Activated B cell treated with CpG ODN at 0.5 μM for 24 hours (primary cell): ENCODE measurements at regions of chr2 and their contacts with region 1.

Region 1: DNA sequence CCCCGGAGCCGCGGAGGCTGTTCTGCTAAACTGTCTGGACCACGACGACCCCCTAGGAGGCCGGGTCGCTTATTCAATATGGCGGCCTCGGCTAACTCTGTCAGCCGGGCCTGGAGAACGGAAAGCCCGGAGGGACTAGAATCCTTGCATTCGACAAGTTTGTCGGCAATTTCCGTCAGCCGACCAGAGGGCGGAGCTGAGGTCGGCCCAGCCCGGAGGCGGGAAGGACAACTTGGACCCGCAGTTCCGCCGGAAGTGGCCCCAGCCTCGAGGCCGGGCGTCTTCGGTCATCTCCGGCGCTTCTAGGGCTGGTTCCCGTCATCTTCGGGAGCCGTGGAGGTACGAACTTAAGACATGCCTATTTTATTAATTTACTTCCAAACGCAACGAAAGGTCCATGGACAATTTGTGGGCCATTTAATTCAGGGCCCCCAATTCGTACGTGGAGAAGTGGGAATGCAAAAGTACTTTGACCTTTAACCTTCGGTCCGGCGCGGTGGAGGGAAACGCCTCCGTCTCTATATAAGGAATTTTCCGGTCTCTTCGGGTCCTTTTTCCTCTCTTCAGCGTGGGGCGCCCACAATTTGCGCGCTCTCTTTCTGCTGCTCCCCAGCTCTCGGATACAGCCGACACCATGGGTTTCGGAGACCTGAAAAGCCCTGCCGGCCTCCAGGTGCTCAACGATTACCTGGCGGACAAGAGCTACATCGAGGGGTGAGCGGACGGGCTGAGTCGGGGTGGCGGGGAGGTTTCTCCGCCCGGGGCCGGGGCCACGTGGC is at the starts of genes EEF1B2 and NDUFS1:
- DNase-seq: peak; percentile 90
- ATAC-seq: peak; percentile 88
- H3K4me3 Mint-ChIP-seq: peak within 1 kb of the TSS; percentile 99
- H3K27ac Mint-ChIP-seq: peak within 1 kb of the TSS; percentile 97
- H3K4me1 Mint-ChIP-seq: peaks cover 56% of the 10 kb centered on the region
- H3K27me3 Mint-ChIP-seq: no peaks in the 10 kb centered on the region
- CTCF ChIP-seq: no peak
- total RNA-seq, gene EEF1B2: 1,278 and 1,486 TPM in 2 replicates
- total RNA-seq, gene NDUFS1: 47.3 and 50.1 TPM in 2 replicates

Region 2: GRCh38 chr2:205947621-205948495 is 211.7 kb before region 1 on chr2:
- CTCF ChIA-PET with region 1: no interaction called
- POLR2A ChIA-PET with region 1: no interaction called
- intact Hi-C with region 1: no loop called
- DNase-seq: peak; percentile 28
- ATAC-seq: peak; percentile 64
- H3K4me3 Mint-ChIP-seq: no peak overlapping the region
- H3K27ac Mint-ChIP-seq: no peak overlapping the region
- H3K4me1 Mint-ChIP-seq: peaks cover 2% of the 10 kb centered on the region
- H3K27me3 Mint-ChIP-seq: peaks cover 19% of the 10 kb centered on the region
- CTCF ChIP-seq: peak; percentile 89

Region 3: GRCh38 chr2:206085742-206086445 is 73.6 kb before region 1 on chr2 and contains the start of gene INO80D:
- CTCF ChIA-PET with region 1: interaction called, 3 read pairs
- POLR2A ChIA-PET with region 1: interaction called, 25 read pairs
- intact Hi-C with region 1: loop called (anchors 1 kb)
- DNase-seq: peak; percentile 76
- ATAC-seq: peak; percentile 89
- H3K4me3 Mint-ChIP-seq: peak within 1 kb of the TSS; percentile 99
- H3K27ac Mint-ChIP-seq: peak within 1 kb of the TSS; percentile 100
- H3K4me1 Mint-ChIP-seq: peaks cover 42% of the 10 kb centered on the region
- H3K27me3 Mint-ChIP-seq: no peaks in the 10 kb centered on the region
- CTCF ChIP-seq: no peak
- total RNA-seq, gene INO80D: 52.1 and 53.1 TPM in 2 replicates

Region 4: DNA sequence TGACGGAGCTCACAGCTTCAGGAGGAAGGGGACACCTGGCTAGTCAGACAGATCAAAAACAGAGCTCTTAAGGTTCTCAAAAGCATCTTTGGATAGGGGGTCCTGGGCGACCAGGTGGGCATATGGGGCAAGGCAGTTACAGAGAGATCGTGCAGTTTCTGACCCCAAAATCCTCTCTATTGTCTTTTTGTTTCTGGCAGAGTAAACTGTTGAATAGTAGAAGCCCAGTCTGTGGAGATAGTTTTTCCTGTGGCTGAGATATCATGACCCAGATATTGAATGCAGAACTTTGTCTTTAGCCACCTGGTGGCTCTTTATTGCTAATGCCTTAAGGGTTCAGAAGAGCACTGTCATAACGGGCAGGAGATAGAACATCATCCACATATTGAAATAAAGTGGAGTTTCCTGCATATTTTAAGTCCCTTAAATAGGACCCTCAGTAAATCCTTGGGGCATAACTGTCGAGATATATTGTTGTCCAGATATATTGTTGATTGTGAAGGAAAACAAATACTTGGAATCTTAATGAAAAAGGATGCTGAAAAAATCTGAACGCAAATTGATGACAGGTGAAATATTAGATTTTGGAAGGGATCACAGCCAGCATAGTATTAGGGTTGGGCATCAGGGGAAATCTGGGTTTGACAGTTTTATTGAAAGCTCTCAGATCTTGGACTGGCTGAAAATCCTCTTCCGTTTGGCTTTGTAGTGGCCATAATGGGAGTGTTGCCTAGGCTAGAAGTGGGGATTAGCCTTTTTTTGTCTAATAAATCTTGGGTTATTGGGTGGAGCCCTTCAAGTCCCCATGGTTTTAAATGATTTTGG is 100.9 kb after region 1 on chr2:
- CTCF ChIA-PET with region 1: interaction called, 7 read pairs
- POLR2A ChIA-PET with region 1: no interaction called
- intact Hi-C with region 1: loop called (anchors 1 kb)
- DNase-seq: no peak
- ATAC-seq: peak; percentile 54
- H3K4me3 Mint-ChIP-seq: no peak overlapping the region
- H3K27ac Mint-ChIP-seq: no peak overlapping the region
- H3K4me1 Mint-ChIP-seq: peaks cover 8% of the 10 kb centered on the region
- H3K27me3 Mint-ChIP-seq: peaks cover 57% of the 10 kb centered on the region
- CTCF ChIP-seq: no peak

Region 5: DNA sequence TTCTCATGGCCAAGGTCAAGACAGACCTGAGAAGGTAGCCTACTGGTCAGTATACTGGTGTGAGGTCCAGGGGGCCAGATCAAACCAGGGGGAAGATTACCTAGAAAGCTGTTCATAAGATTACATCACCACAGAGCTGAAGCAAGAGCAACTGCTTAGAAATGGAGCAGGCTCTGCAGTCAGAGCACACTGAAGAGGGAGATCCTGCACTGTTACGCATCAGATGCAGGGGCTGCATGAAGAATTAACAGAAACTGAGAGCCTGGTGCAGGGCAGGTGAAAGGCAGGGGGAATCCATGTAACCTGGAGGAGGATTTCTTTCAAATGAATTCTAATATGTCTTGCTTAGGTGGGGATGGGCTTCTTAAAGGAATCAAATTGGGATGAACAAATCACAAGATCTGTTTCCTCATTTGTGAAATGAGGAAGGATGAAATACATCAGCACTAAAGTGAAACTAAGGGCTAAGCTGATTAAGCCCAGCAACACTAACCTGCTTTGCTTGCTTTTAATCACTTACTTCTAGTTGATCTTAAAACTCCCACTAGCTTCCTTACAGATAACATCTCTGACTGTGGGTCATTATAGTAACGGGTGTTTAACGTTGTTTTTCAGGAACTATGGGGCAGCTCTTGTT is 209.5 kb after region 1 on chr2:
- CTCF ChIA-PET with region 1: no interaction called
- POLR2A ChIA-PET with region 1: no interaction called
- intact Hi-C with region 1: no loop called
- DNase-seq: no peak
- ATAC-seq: peak; percentile 21
- H3K4me3 Mint-ChIP-seq: no peak overlapping the region
- H3K27ac Mint-ChIP-seq: no peak overlapping the region
- H3K4me1 Mint-ChIP-seq: peaks cover 11% of the 10 kb centered on the region
- H3K27me3 Mint-ChIP-seq: peaks cover under 1% of the 10 kb centered on the region
- CTCF ChIP-seq: no peak

Region 6: GRCh38 chr2:206442833-206443734 is 283.5 kb after region 1 on chr2 and contains the start of gene ADAM23:
- CTCF ChIA-PET with region 1: no interaction called
- POLR2A ChIA-PET with region 1: no interaction called
- intact Hi-C with region 1: loop called (anchors 1 kb)
- DNase-seq: peak; percentile 37
- ATAC-seq: peak; percentile 66
- H3K4me3 Mint-ChIP-seq: peak within 1 kb of the TSS; percentile 80
- H3K27ac Mint-ChIP-seq: no peak within 1 kb of the TSS
- H3K4me1 Mint-ChIP-seq: peaks cover 16% of the 10 kb centered on the region
- H3K27me3 Mint-ChIP-seq: peaks cover 50% of the 10 kb centered on the region
- CTCF ChIP-seq: no peak
- total RNA-seq, gene ADAM23: 0.86 and 1.5 TPM in 2 replicates

Region 7: DNA sequence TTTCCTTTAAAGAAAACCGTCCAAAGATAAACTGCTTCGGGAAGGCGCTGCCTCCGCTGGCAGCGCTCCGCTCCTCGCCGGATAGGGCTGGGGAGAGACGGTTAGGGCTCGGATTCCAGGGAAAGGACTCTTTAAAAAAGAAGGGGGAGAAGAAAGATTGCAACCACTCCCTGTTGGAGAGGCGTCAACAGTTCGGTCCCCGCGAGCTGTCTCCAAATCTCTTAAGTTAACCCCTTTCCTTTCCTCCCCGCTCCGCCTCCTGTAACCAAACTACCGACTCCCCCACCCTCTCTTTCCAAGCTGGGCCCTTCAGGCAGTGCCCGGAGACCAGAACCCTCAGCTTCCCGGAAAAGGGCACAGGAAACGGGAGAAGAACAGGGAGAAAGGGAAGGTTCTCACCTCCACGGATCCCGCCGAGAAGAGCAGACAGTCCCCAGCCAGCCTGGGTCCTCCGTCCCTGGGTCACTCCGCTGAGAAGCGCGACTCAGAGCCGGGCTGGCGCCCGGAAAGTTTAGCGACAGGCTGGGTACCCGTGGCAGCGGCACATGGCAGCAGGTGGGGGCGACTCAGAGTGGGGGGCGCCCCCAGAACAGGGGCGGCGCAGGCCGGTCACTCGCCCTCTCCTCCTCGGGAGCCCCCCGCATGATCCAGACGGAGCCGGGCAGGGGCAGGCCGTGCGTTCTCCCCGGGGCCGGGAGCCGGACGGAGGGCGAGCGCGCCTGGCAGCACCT is 1609.5 kb after region 1 on chr2:
- CTCF ChIA-PET with region 1: no interaction called
- POLR2A ChIA-PET with region 1: no interaction called
- intact Hi-C with region 1: no loop called
- DNase-seq: no peak
- ATAC-seq: no peak
- H3K4me3 Mint-ChIP-seq: peak overlapping the region; percentile 86
- H3K27ac Mint-ChIP-seq: no peak overlapping the region
- H3K4me1 Mint-ChIP-seq: peaks cover 36% of the 10 kb centered on the region
- H3K27me3 Mint-ChIP-seq: peaks cover 10% of the 10 kb centered on the region
- CTCF ChIP-seq: no peak

Region 8: GRCh38 chr2:208025037-208025813 is 1865.7 kb after region 1 on chr2 and contains the start of gene PLEKHM3:
- CTCF ChIA-PET with region 1: no interaction called
- POLR2A ChIA-PET with region 1: no interaction called
- intact Hi-C with region 1: loop called (anchors 10 kb)
- DNase-seq: peak; percentile 76
- ATAC-seq: peak; percentile 91
- H3K4me3 Mint-ChIP-seq: peak within 1 kb of the TSS; percentile 86
- H3K27ac Mint-ChIP-seq: peak within 1 kb of the TSS; percentile 92
- H3K4me1 Mint-ChIP-seq: peaks cover 20% of the 10 kb centered on the region
- H3K27me3 Mint-ChIP-seq: no peaks in the 10 kb centered on the region
- CTCF ChIP-seq: no peak
- total RNA-seq, gene PLEKHM3: 12.0 and 12.2 TPM in 2 replicates